Esophagus muscularis mucosa (tissue), 4 donors: ENCODE measurements at regions of chr9 and their contacts with region 1.

Region 1: GRCh38 chr9:133992780-133993634 is 883 bp upstream of the VAV2 start:
- DNase-seq: peak; percentile 97
- H3K4me3 ChIP-seq: peak overlapping the region; percentile 69 to 90 (median 76)
- H3K27ac ChIP-seq: peak overlapping the region; percentile 87 to 92 (median 88)
- H3K4me1 ChIP-seq: peaks cover 20 to 46% (median 35%) of the 10 kb centered on the region in 4 donors
- H3K27me3 ChIP-seq: peaks cover 0 to 6% (median 0%) of the 10 kb centered on the region in 4 donors
- CTCF ChIP-seq: peak in 2 of 3 experiments; percentile 29 to 38
- EP300 ChIP-seq: no peak
- POLR2A ChIP-seq: peak; percentile 24

Region 2: DNA sequence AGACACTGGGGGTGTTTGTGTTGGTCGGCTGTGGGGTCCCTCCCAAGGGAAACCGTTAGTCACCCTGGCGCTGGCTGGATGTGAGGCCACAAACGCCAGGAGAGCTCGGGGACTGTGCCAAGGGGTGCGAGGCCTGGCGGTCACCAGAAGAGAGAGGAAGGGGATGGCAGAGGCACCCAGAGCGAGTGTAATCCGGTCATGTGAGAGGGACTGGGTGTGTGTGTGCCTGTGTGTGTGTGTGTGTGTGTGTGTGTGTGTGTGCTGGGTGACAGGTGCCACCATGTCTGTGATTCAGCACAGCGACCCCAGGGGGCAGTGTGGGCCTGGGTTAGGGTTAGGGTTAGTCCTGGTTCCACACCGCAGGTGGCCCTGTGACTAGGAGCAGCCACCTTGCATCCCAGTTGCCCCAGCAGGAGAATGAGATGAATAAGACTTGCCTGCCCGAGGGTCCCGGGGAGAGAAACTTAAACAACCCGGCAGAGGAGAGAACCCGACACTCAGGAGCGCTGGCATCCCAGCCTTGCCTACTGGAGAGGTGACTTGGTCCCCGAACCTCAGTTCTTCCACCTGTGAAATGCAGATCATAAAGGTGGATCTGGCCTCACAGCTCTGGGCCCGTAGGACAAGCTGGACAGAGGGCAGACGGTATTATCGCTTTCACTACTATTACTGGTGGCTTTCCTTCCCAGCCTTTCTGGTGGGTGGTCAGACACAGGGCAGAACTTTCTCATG is 459.9 kb before region 1 on chr9:
- intact Hi-C with region 1: loop called (anchors 10 kb)
- DNase-seq: no peak
- H3K4me3 ChIP-seq: no peak overlapping the region
- H3K27ac ChIP-seq: no peak overlapping the region
- H3K4me1 ChIP-seq: peaks cover 28 to 52% (median 43%) of the 10 kb centered on the region in 4 donors
- H3K27me3 ChIP-seq: peaks cover 0 to 29% (median 0%) of the 10 kb centered on the region in 4 donors
- CTCF ChIP-seq: peak; percentile 33 to 53 (median 51)
- EP300 ChIP-seq: no peak
- POLR2A ChIP-seq: no peak

Region 3: DNA sequence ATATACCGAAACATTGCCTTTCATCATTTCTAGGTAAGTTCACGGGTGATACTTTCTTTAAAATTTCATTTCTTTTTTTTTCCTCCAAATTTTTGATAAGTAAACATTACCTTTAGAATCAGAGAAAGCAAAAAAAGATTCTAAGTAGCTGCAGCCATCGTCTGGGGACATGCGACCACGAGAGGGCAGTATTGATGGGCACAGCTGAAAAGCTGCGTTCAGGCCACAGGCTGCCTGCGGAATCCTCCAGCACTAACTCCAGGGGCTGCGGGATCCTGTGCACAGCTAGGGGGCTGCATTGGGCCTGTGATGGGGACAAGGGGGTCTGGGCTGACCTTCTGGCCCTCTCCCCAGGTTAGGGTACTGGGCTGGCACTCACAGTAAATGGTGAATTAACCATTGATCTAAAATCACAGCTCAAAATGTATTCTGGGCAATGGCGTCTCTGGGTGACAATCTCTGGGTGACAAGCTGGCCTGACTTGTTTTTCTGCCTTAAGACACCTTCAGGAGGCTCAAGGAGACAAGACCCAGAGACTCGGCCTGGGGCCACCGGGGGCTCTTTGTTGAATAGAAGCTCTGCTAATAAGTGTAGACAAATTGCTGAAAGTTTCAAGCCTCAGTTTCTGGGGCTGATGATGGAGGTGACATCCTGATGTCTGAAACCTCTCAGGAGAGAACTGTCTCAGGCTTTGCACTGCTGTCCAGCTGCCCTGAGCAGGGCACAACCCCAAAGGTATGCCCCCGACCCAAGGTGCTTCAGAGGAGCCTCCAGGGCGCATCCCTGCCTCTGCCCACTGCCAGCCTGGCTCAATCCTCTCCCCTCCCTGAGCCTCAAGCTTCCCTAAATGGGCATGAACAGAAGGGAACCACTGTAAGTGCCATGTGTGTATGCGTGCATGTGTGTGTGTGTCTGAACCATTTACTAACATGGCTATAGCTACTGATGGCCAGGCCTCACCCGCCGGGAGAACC is 210.6 kb before region 1 on chr9:
- intact Hi-C with region 1: loop called (anchors 2 kb)
- DNase-seq: no peak
- H3K4me3 ChIP-seq: no peak overlapping the region
- H3K27ac ChIP-seq: no peak overlapping the region
- H3K4me1 ChIP-seq: peaks cover 0 to 7% (median 4%) of the 10 kb centered on the region in 4 donors
- H3K27me3 ChIP-seq: no peaks in the 10 kb centered on the region
- CTCF ChIP-seq: peak; percentile 58 to 82 (median 67)
- EP300 ChIP-seq: no peak
- POLR2A ChIP-seq: no peak

Region 4: GRCh38 chr9:133792721-133793470 is 200.1 kb before region 1 on chr9:
- intact Hi-C with region 1: loop called (anchors 1 kb)
- DNase-seq: peak; percentile 95
- H3K4me3 ChIP-seq: peak overlapping the region in 2 of 4 donors; percentile 17 to 22
- H3K27ac ChIP-seq: no peak overlapping the region
- H3K4me1 ChIP-seq: peaks cover 19 to 34% (median 31%) of the 10 kb centered on the region in 4 donors
- H3K27me3 ChIP-seq: no peaks in the 10 kb centered on the region
- CTCF ChIP-seq: peak; percentile 95 to 96 (median 96)
- EP300 ChIP-seq: no peak
- POLR2A ChIP-seq: no peak

Region 5: GRCh38 chr9:133855802-133856521 is 137.0 kb before region 1 on chr9:
- intact Hi-C with region 1: loop called (anchors 5 kb)
- DNase-seq: no peak
- H3K4me3 ChIP-seq: no peak overlapping the region
- H3K27ac ChIP-seq: peak overlapping the region in 3 of 4 donors; percentile 10 to 44 (median 27)
- H3K4me1 ChIP-seq: peaks cover 0 to 5% (median 0%) of the 10 kb centered on the region in 4 donors
- H3K27me3 ChIP-seq: no peaks in the 10 kb centered on the region
- CTCF ChIP-seq: no peak
- EP300 ChIP-seq: no peak
- POLR2A ChIP-seq: no peak

Region 6: GRCh38 chr9:133916159-133916541 is 76.9 kb before region 1 on chr9:
- intact Hi-C with region 1: no loop called
- DNase-seq: no peak
- H3K4me3 ChIP-seq: no peak overlapping the region
- H3K27ac ChIP-seq: no peak overlapping the region
- H3K4me1 ChIP-seq: peaks cover 14 to 30% (median 25%) of the 10 kb centered on the region in 4 donors
- H3K27me3 ChIP-seq: no peaks in the 10 kb centered on the region
- CTCF ChIP-seq: no peak
- EP300 ChIP-seq: no peak
- POLR2A ChIP-seq: no peak